ENCODE measurements at regions of chr12 and their contacts with region 1.

Region 1: DNA sequence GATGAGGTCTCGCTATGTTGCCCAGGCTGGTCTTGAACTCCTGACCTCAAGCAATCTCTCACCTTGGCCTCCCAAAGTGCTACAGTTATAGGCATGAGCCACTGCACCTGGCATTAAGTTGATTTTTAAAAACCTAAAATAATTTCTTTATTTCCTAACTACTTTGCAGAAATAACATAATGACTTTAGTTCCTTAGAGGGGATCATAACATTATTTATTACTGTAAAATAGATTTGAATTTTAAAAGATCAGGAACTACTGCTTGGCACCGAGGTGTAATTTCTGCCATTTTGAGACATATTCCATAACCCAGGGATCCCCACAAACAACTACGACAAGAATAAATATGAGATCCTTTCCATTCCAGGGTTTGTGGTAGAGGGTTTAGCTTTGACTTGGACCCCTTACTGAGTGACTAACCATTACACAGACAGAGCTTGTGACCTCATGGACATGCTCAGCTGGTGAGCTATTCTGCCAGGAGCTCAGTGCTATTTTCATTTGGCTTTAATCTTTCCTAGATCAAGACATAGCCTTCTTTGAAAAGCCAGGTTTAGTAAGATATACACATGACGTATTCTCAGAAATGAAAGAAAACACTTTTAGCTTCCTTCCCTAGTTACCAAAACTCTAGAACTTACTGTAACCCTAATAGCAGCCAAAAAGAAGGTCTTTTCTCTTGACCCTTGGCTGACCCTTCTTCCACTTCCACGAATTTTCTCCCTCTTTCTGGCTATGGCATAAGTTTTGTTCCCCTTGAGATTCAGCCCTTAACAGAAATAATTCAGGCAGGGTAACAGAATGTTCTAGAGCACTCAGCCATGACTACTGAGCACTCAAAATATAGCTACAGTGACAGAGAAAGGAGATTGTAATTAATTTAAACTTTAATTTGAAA is 75.1 kb upstream of the NUDT4 start:
- DNase-seq: no peak

Region 2: GRCh38 chr12:93183940-93184671 is 118.5 kb before region 1 on chr12:
- intact Hi-C with region 1: loop called (anchors 5 kb)
- DNase-seq: no peak

Region 3: GRCh38 chr12:93352321-93352720 is 49.7 kb after region 1 on chr12:
- intact Hi-C with region 1: loop called (anchors 5 kb)
- DNase-seq: no peak

Measured in cardiac septum (tissue), 1 donor.